Activated CD4-positive, alpha-beta T cell treated with anti-CD3 and anti-CD28 coated beads, Interleukin-2, amount 10 ng/mL, durations not matched to agents 24 days and 14 days (primary cell): ENCODE measurements at regions of chr5 and their contacts with region 1.

Region 1: DNA sequence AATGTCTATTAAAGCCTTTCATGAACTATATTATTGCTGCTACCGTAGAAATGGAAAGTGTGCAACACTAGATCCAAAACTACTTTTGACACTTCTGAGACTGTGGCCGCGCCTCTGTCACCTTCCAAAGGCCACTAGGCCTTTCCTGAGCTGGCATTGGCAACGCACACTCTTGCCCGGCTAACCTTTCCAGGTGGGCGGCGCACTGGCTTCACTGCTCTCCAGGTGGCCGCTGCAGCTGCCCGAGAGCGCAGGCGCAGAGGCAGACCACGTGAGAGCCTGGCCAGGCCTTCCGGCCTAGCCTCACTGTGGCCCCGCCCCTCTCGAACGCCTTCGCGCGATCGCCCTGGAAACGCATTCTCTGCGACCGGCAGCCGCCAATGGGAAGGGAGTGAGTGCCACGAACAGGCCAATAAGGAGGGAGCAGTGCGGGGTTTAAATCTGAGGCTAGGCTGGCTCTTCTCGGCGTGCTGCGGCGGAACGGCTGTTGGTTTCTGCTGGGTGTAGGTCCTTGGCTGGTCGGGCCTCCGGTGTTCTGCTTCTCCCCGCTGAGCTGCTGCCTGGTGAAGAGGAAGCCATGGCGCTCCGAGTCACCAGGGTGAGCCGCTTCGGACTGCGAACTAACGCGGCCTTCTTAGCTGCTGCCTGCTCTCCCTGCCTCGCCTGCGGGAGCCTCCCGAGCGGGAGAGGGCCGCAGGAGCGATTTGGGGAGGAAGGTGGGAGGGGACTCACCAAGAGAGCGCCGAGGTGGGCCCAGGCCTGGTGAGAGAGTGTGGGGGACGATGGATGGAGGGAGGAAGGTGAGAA is at the start of gene CCNB1:
- DNase-seq: peak; percentile 100
- H3K4me3 Mint-ChIP-seq: peak within 1 kb of the TSS; percentile 98
- H3K27ac Mint-ChIP-seq: peak within 1 kb of the TSS; percentile 95
- H3K4me1 Mint-ChIP-seq: peaks cover 33% of the 10 kb centered on the region
- H3K27me3 Mint-ChIP-seq: peaks cover 2% of the 10 kb centered on the region
- total RNA-seq, gene CCNB1: 117 and 122 TPM in 2 replicates

Region 2: GRCh38 chr5:69217548-69218526 is 50.9 kb after region 1 on chr5:
- intact Hi-C with region 1: loop called (anchors 1 kb)
- DNase-seq: peak; percentile 98
- H3K4me3 Mint-ChIP-seq: peak overlapping the region; percentile 96
- H3K27ac Mint-ChIP-seq: peak overlapping the region; percentile 98
- H3K4me1 Mint-ChIP-seq: peaks cover 17% of the 10 kb centered on the region
- H3K27me3 Mint-ChIP-seq: no peaks in the 10 kb centered on the region